Left cardiac atrium (tissue), 4 donors: ENCODE measurements at regions of chr7 and their contacts with region 1.

Region 1: GRCh38 chr7:119935418-119936025 is 337.5 kb upstream of the KCND2 start:
- DNase-seq: no peak
- ATAC-seq: no peak

Region 2: DNA sequence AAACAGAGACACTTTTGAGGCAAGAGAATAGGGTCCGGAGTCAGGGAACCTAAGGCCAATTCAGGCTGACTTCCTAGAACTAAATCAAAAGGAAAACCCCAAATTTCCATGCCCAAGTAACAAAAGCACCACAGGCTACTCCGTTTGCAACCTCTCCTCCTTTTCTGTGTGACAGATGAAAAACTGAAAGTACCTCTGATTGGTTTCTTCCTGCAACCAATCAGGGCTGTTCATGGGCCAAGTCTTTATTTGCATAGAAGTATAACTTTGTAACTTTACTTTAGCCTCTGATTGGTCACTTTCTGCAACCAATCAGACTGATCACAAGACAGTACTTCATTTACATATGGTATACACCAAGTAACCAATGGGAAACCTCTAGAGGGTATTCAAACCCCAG is 97.6 kb after region 1 on chr7:
- intact Hi-C with region 1: no loop called
- DNase-seq: no peak
- ATAC-seq: no peak

Region 3: GRCh38 chr7:120272261-120272660 is 336.7 kb after region 1 on chr7:
- intact Hi-C with region 1: loop called in 1 of 2 experiments (anchors 10 kb)
- DNase-seq: no peak
- ATAC-seq: peak in 1 of 2 donors; percentile 61